GM12878 (cell line): ENCODE measurements at regions of chr1 and their contacts with region 1.

Region 1: GRCh38 chr1:184069675-184070074 is 18.1 kb downstream of the TSEN15 start:
- DNase-seq: no peak
- ATAC-seq: no peak
- H3K4me3 ChIP-seq: no peak overlapping the region
- H3K27ac ChIP-seq: no peak overlapping the region
- H3K4me1 ChIP-seq: no peaks in the 10 kb centered on the region
- H3K27me3 ChIP-seq: no peaks in the 10 kb centered on the region
- CTCF ChIP-seq: no peak
- EP300 ChIP-seq: no peak
- POLR2A ChIP-seq: no peak
- RAD21 ChIP-seq: no peak

Region 2: DNA sequence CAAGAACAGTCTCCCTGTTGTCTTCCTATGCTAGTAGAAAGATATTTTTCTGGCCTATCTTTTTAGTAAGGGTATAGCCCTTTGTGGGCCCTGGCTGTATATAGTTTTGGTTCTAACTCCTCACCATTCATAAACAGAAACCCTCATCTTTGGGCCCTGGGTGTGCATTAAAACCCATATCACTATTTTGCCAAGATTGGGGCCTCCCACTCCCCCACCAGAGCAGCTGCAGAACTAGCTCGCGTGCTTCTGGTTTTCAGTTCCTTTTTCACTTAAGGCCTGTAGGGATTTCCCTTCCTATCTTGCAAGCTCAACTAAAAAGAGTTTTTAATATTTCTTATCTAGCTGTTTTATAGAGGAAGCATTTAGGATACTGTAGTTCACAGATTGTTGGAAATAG is 158.4 kb before region 1 on chr1:
- CTCF ChIA-PET with region 1: no interaction called
- POLR2A ChIA-PET with region 1: no interaction called
- RAD21 ChIA-PET with region 1: no interaction called
- SMC1A ChIA-PET with region 1: no interaction called
- in situ Hi-C with region 1: no loop called
- intact Hi-C with region 1: no loop called
- DNase-seq: peak; percentile 71
- ATAC-seq: peak; percentile 87
- H3K4me3 ChIP-seq: peak overlapping the region; percentile 44; the same call in 1 of the 2 replicates
- H3K27ac ChIP-seq: peak overlapping the region; percentile 100
- H3K4me1 ChIP-seq: peaks cover 51% of the 10 kb centered on the region
- H3K27me3 ChIP-seq: no peaks in the 10 kb centered on the region
- CTCF ChIP-seq: no peak
- EP300 ChIP-seq: peak; percentile 99
- POLR2A ChIP-seq: no peak
- RAD21 ChIP-seq: peak; percentile 34; the same call in 1 of the 2 replicates

Region 3: DNA sequence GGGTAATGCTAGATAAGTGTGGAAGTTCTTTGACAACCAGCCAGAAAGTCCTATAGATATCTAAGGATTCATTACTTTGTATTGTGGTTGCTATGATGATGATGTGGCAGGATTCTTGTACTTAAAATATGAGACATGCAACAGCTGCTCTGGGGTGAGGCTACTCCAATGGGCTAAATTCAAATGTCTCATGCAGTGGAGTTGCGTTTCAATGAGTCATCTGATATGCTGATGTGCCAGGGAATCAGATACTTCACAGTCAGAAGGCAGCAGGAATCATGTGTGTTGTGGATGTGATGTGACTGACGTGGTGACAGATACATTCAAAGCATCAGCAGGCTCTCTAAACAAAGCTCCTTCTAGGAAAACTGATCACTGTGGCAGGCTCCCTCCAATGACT is 48.4 kb after region 1 on chr1:
- CTCF ChIA-PET with region 1: no interaction called
- POLR2A ChIA-PET with region 1: no interaction called
- RAD21 ChIA-PET with region 1: no interaction called
- SMC1A ChIA-PET with region 1: no interaction called
- in situ Hi-C with region 1: loop called (anchors 5 kb)
- intact Hi-C with region 1: no loop called
- DNase-seq: no peak
- ATAC-seq: no peak
- H3K4me3 ChIP-seq: no peak overlapping the region
- H3K27ac ChIP-seq: no peak overlapping the region
- H3K4me1 ChIP-seq: no peaks in the 10 kb centered on the region
- H3K27me3 ChIP-seq: no peaks in the 10 kb centered on the region; a peak in 1 of 4 replicates
- CTCF ChIP-seq: no peak
- EP300 ChIP-seq: no peak
- POLR2A ChIP-seq: no peak
- RAD21 ChIP-seq: no peak